SK-N-SH (cell line): ENCODE measurements at regions of chr3 and their contacts with region 1.

Region 1: DNA sequence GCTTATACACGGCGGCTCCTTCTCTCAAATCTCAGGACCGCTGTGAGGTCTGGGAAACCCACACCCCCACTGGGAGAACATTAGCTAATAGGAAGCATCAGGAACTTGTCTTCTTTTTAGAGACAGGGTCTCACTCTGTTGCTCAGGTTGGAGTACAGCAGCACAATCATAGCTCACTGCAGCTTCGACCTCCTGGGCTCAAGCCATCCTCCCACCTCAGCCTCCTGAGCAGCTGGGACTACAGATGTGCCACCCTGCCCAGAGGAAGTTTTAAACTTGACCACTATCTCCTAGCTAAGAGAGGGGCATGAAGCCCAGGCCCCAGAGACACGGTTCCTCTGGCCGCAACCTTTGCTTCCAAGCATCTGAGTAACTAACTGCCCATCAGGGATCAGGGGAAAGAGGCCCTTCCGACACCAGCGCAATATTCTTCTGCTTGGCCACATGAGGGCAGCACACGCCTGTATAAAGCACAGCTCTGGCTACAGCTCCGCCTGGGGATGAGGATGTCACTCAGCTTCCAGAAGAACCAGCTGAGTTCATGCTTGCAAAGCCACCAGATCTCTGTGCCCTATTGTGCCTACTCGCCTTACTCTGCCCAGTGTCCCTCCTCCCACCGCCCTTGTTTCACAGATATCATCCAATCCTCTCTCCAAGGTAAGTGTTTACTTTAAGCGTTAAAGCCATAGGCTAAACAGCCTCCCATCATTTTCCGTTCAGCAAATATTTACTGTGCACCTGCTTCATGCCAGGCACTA is 57.5 kb upstream of the SLC6A11 start:
- DNase-seq: peak; percentile 86
- H3K4me3 ChIP-seq: no peak overlapping the region
- H3K27ac ChIP-seq: no peak overlapping the region
- H3K4me1 ChIP-seq: no peaks in the 10 kb centered on the region; a peak in 1 of 4 replicates
- H3K27me3 ChIP-seq: no peaks in the 10 kb centered on the region
- CTCF ChIP-seq: peak; percentile 67
- EP300 ChIP-seq: no peak
- RAD21 ChIP-seq: peak; percentile 94

Region 2: DNA sequence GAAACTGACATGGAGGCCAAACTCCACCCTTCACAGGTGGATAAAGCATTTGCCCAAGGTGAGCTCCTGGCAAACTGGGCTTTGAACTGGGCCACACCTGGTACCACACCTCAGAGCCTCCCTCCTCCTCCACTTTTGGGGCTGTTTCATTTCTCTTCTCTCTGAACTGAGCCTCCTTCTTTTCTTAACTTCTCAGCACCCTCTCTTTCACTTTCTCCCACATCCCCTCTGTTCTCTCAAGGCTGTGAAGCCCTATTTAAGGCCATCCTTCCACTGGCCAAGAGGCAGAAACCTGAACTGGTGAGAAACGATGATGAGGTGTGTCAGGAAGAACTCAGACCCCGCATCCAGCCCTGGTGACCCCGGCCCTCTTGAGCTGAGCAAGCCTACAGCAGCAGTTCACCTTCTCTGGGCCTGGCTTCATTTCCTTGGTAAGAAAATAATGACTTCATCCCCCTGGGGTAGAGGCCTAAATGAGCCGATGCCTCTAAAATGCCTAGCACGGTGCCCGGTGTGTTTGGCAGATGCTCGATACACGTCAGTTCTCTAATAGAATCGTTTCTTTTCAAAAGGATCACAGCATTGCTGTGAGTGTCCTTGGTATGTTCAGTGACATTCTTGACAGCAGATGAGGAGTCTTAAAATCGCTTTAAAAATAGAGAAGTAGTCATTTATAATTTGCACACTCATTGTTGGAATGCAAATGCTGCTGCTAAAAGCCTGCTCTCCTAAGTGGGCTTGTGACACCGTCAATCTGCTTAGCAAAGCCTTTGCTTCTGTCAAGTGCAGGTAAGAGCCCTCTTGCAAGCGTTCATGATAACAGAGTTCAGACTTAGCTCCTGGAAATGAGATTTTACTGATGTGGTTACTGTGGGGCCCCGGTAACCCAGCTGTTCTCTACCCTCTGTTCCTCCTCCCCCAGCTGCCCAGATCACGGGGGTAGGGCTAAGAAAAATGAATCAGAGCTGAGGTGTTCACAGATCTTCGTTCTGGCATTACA is 155.4 kb before region 1 on chr3:
- CTCF ChIA-PET with region 1: no interaction called
- POLR2A ChIA-PET with region 1: no interaction called
- DNase-seq: no peak
- H3K4me3 ChIP-seq: no peak overlapping the region
- H3K27ac ChIP-seq: no peak overlapping the region
- H3K4me1 ChIP-seq: peaks cover 0 to 33% of the 10 kb centered on the region in 2 experiments; a peak in 1 of 4 replicates
- H3K27me3 ChIP-seq: no peaks in the 10 kb centered on the region
- CTCF ChIP-seq: no peak
- EP300 ChIP-seq: no peak
- RAD21 ChIP-seq: no peak

Region 3: GRCh38 chr3:10748040-10748439 is 10.4 kb before region 1 on chr3:
- CTCF ChIA-PET with region 1: interaction called, 14 read pairs
- POLR2A ChIA-PET with region 1: no interaction called
- DNase-seq: no peak
- H3K4me3 ChIP-seq: no peak overlapping the region
- H3K27ac ChIP-seq: no peak overlapping the region
- H3K4me1 ChIP-seq: no peaks in the 10 kb centered on the region
- H3K27me3 ChIP-seq: no peaks in the 10 kb centered on the region
- CTCF ChIP-seq: no peak
- EP300 ChIP-seq: no peak
- RAD21 ChIP-seq: no peak

Region 4: GRCh38 chr3:10772271-10773161 is 14.0 kb after region 1 on chr3:
- CTCF ChIA-PET with region 1: interaction called, 46 read pairs
- POLR2A ChIA-PET with region 1: no interaction called
- DNase-seq: peak; percentile 58
- H3K4me3 ChIP-seq: no peak overlapping the region
- H3K27ac ChIP-seq: no peak overlapping the region
- H3K4me1 ChIP-seq: peaks cover 0 to 3% of the 10 kb centered on the region in 2 experiments; a peak in 1 of 4 replicates
- H3K27me3 ChIP-seq: no peaks in the 10 kb centered on the region
- CTCF ChIP-seq: 0 out of 2 replicates have a peak, but pooled peaks have one; percentile 8
- EP300 ChIP-seq: no peak
- RAD21 ChIP-seq: no peak

Region 5: DNA sequence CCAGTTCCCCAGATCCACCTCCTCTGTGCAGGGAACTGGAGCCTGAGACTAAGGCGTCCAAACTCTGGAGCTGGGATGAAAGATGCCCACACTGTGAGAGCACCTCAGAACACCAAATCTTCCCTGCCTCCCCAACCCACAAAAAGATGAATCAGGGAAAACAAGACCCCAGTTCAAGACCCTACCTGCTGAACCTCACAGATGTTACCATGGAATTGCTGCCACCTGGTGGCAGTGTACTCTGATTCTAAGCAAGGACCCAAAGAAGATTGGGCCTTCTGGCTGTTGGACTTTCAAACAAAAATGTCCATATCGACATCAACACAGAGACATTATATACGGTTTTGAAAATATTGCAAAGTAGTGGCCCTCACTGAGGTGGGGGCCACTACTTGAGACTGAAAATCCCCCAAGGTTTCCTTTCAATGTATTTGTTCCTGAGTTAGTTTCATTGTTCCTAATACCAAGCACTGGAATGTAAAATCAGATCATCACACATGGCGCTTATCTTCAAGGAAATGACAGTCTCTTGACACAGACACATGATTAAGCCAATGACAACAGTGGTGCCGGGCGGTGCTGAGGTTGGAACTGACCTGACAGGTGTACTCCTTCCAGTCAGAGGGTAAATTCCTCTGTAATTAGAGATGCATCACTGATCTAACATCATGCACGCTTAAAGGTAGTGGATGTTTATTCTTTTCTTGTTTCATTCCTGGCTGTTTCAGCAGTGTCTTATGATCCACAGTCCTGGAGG is 125.2 kb after region 1 on chr3:
- CTCF ChIA-PET with region 1: interaction called, 53 read pairs
- POLR2A ChIA-PET with region 1: no interaction called
- DNase-seq: peak; percentile 60
- H3K4me3 ChIP-seq: no peak overlapping the region
- H3K27ac ChIP-seq: no peak overlapping the region
- H3K4me1 ChIP-seq: no peaks in the 10 kb centered on the region
- H3K27me3 ChIP-seq: no peaks in the 10 kb centered on the region
- CTCF ChIP-seq: peak; percentile 40
- EP300 ChIP-seq: no peak
- RAD21 ChIP-seq: peak; percentile 62

Region 6: DNA sequence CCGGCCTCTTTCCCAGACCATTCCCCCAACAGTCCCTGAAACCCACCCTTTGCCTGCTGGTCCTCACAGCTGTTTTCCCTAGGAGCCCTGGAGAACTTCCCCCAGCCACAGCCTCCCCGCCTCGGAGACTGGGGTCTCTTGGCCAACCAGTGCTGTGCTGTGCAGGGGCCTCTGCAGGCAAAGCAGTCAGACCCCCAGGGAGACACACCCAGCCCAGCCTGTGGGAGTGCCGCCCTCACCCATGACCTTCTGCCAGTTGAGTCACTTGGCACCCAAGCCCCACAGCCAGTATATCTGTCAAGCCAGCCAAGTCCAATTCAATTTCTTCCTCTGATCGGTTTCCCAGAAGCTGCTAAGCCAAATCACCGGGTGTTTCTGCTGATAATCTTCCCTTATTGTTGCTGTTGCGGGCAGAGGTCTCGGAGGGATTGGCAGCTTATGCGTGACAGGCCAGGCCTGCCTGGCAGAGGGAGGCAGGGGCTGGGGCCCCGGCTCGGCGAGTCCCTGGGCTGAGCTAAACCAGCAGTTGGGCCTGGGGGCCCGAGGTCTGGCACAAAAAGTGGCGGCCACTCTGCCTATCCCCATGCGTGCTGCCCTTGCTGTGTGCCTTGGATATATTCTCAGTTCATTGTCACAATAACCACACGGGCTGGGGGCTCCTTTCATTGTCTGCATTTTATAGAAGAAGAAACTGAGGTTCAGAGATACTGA is 168.5 kb after region 1 on chr3:
- CTCF ChIA-PET with region 1: interaction called, 12 read pairs
- POLR2A ChIA-PET with region 1: no interaction called
- DNase-seq: no peak
- H3K4me3 ChIP-seq: no peak overlapping the region
- H3K27ac ChIP-seq: peak overlapping the region in 1 of 2 experiments; percentile 79; a peak in 2 of 4 replicates
- H3K4me1 ChIP-seq: peaks cover 0 to 34% of the 10 kb centered on the region in 2 experiments; a peak in 1 of 4 replicates
- H3K27me3 ChIP-seq: no peaks in the 10 kb centered on the region
- CTCF ChIP-seq: no peak
- EP300 ChIP-seq: no peak
- RAD21 ChIP-seq: no peak